ENCODE measurements at regions of chr3 and their contacts with region 1.

Region 1: DNA sequence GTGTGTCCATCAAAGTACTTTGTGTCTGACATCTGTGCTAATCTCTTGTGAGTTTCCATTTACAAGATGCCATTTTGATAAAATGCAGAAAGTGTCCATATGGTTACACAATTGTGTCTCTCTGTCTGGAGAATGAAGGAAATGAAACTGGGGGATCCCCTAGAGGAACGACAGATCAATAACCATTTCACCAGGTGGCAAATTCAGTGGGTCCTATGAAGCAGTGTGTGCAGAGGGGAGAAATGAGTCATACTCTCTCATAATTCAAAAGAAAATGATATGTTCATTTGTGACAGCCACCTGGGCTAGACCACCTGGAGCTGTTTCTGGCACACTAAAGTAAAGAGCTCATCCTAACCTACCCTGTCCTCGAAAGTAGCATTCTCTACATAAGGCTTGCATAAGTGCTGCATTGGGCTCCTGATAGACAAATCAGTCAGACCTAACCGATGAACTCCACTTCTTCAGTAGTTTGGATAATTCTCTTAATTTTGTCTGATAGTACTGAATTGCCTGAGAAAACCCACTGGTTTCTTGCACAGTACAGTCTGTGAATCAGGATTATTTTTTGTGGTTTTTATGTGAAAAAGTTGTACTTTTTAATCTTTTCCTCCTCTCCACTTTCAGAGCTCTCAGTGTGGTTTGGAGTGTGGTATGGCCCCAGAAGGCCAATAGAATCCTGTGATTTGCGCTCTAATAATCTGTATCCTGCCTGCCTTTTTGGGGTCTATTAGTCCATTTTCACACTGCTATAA is 10.3 kb upstream of the CD47 start:
- DNase-seq: no peak
- H3K4me3 ChIP-seq: no peak overlapping the region
- H3K27ac ChIP-seq: no peak overlapping the region
- H3K4me1 ChIP-seq: no peaks in the 10 kb centered on the region
- H3K27me3 ChIP-seq: no peaks in the 10 kb centered on the region
- CTCF ChIP-seq: no peak
- POLR2A ChIP-seq: no peak

Region 2: DNA sequence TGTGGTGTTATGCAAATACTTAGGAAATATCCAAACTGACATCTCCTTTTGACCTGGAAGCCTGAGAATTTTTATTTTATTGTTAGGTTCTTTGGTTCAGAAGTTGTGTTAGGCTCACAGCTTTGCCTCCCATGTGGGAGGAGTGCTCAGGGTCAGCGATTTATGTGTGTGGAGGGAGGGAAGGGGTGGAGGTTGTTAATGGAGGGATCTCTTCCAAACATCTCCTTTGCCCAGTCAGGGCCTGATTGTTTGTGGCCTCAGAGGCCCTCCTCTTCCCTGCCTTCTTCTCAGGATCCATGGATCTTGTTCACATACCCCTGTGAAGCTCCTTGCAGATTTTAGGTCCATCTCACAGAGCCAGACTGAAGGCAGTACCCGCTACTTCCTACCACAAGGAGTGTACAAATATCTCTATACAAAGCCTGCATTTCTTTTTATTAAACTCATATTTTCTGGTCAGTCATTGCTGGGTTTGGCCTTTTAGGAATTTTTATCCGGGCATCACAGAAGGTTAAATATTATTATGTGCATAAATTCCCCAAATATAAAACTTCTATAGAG is 538.0 kb before region 1 on chr3:
- intact Hi-C with region 1: loop called (anchors 5 kb)
- DNase-seq: no peak
- H3K4me3 ChIP-seq: no peak overlapping the region
- H3K27ac ChIP-seq: no peak overlapping the region
- H3K4me1 ChIP-seq: no peaks in the 10 kb centered on the region
- H3K27me3 ChIP-seq: no peaks in the 10 kb centered on the region
- CTCF ChIP-seq: no peak
- POLR2A ChIP-seq: no peak

Region 3: GRCh38 chr3:108022256-108023097 is 78.6 kb before region 1 on chr3:
- intact Hi-C with region 1: no loop called
- DNase-seq: no peak
- H3K4me3 ChIP-seq: no peak overlapping the region
- H3K27ac ChIP-seq: no peak overlapping the region
- H3K4me1 ChIP-seq: no peaks in the 10 kb centered on the region
- H3K27me3 ChIP-seq: no peaks in the 10 kb centered on the region
- CTCF ChIP-seq: no peak
- POLR2A ChIP-seq: no peak

Measured in breast epithelium (tissue), 4 donors.